Activated CD4-positive, alpha-beta memory T cell treated with anti-CD3 and anti-CD28 coated beads for 36 hours (primary cell): ENCODE measurements at regions of chr12 and their contacts with region 1.

Region 1: GRCh38 chr12:9027161-9028059 is 38.1 kb downstream of the KLRG1 start:
- DNase-seq: peak; percentile 74
- H3K4me3 Mint-ChIP-seq: peak overlapping the region; percentile 64
- H3K27ac Mint-ChIP-seq: peak overlapping the region; percentile 87
- H3K4me1 Mint-ChIP-seq: peaks cover 36% of the 10 kb centered on the region
- H3K27me3 Mint-ChIP-seq: peaks cover 2% of the 10 kb centered on the region

Region 2: GRCh38 chr12:8989413-8989812 is 38.0 kb before region 1 on chr12 and contains the start of gene KLRG1:
- CTCF ChIA-PET with region 1: no interaction called
- POLR2A ChIA-PET with region 1: interaction called, 3 read pairs
- intact Hi-C with region 1: loop called (anchors 1 kb)
- DNase-seq: peak; percentile 51
- H3K4me3 Mint-ChIP-seq: peak within 1 kb of the TSS; percentile 64
- H3K27ac Mint-ChIP-seq: peak within 1 kb of the TSS; percentile 63
- H3K4me1 Mint-ChIP-seq: peaks cover 61% of the 10 kb centered on the region
- H3K27me3 Mint-ChIP-seq: no peaks in the 10 kb centered on the region
- total RNA-seq, gene KLRG1: 4.4 to 5.4 TPM

Region 3: GRCh38 chr12:8996682-8997360 is 30.6 kb before region 1 on chr12:
- CTCF ChIA-PET with region 1: interaction called, 5 read pairs
- POLR2A ChIA-PET with region 1: interaction called, 3 read pairs
- intact Hi-C with region 1: loop called (anchors 1 kb)
- DNase-seq: peak; percentile 58
- H3K4me3 Mint-ChIP-seq: no peak overlapping the region
- H3K27ac Mint-ChIP-seq: no peak overlapping the region
- H3K4me1 Mint-ChIP-seq: peaks cover 70% of the 10 kb centered on the region
- H3K27me3 Mint-ChIP-seq: no peaks in the 10 kb centered on the region

Region 4: DNA sequence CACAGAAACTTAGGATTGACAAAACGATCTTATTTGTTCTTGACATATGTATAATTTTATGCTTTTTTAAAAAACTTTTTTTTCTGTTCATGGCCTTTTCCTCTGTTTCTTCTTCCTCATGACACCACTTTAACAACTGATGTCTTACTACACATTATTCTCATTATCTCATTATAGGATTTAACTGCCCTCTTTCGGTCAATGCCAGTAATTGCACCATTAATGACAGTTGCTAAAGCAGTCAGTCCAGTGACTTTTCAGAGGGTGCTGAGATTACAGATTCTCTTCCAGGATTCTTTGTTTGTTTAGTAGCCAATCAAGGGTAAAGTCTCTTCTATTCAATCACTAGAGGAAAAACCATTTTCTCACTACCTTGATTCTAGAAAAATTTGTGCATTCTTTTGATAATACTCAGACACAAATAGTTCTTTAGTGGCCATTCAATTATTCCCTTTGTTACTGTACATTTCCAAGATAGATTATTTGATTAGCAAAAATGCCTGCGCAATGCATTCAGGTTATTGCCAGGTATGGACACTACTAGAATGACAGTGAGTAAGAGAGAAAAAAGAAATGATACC is 12.1 kb after region 1 on chr12:
- CTCF ChIA-PET with region 1: interaction called, 13 read pairs
- POLR2A ChIA-PET with region 1: interaction called, 3 read pairs
- intact Hi-C with region 1: loop called (anchors 1 kb)
- DNase-seq: no peak
- H3K4me3 Mint-ChIP-seq: no peak overlapping the region
- H3K27ac Mint-ChIP-seq: no peak overlapping the region
- H3K4me1 Mint-ChIP-seq: peaks cover 60% of the 10 kb centered on the region
- H3K27me3 Mint-ChIP-seq: no peaks in the 10 kb centered on the region